Endothelial cell of umbilical vein (primary cell): ENCODE measurements at regions of chr15 and their contacts with region 1.

Region 1: GRCh38 chr15:68304589-68305337 is 27.2 kb downstream of the FEM1B start:
- DNase-seq: no peak
- H3K4me3 ChIP-seq: no peak overlapping the region
- H3K27ac ChIP-seq: no peak overlapping the region
- H3K4me1 ChIP-seq: peaks cover 3% of the 10 kb centered on the region
- H3K27me3 ChIP-seq: no peaks in the 10 kb centered on the region
- CTCF ChIP-seq: no peak
- POLR2A ChIP-seq: no peak

Region 2: DNA sequence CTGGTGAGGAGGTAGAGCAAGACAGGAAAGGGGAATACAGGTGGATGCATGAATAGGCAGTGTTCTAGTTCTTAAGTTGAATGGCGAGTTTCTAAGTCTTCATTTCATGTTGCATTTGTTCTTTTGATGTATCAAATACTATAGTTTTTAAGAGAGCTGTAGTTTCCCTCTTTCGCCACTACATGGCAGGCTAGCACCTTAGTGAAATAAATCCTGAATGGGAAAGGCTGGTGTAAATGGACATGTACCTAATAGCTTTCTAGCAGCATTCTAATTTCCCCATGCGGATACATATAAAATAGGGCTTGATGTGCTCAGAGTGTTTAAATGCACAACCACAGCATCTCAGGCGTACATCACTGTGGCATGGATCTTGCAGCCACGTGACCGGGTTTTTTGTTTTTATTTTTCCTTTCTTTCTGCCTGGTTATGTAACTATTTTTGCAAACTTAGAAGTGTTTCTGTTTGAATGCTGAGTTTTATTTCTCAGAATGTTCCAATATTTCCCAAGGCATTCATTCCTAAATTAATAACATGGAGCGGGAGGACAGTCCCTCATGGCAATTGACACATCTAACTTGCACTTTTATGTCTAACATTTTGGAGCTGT is 51.7 kb before region 1 on chr15:
- CTCF ChIA-PET with region 1: interaction called, 233 read pairs
- POLR2A ChIA-PET with region 1: interaction called, 4 read pairs
- dilution Hi-C with region 1: no loop called
- intact Hi-C with region 1: loop called (anchors 1 kb)
- DNase-seq: peak; percentile 80
- H3K4me3 ChIP-seq: no peak overlapping the region
- H3K27ac ChIP-seq: no peak overlapping the region
- H3K4me1 ChIP-seq: peaks cover 5% of the 10 kb centered on the region
- H3K27me3 ChIP-seq: peaks cover 7 to 10% of the 10 kb centered on the region in 2 experiments
- CTCF ChIP-seq: peak; percentile 64 to 66
- POLR2A ChIP-seq: no peak

Region 3: DNA sequence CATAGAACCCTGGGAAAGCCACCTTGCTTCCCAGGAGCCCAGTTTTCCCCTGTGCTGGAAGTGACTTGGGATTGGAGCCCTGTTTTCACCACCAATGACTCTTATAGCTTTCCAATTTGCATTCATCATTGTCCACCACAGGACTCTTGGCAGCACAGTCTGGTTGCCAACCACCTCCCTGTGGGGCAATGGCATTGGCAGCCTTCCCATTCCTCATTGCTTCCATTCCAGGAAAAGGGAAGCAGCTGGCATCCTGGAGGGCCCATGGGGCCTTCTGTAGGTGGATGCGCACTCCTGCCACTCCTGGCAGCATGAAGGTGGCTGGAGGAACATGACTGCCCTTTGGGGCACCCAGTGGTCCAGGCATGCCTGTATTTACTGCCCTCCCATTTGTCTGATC is 30.5 kb after region 1 on chr15:
- CTCF ChIA-PET with region 1: interaction called, 15 read pairs
- POLR2A ChIA-PET with region 1: interaction called, 3 read pairs
- dilution Hi-C with region 1: no loop called
- intact Hi-C with region 1: no loop called
- DNase-seq: peak; percentile 59
- H3K4me3 ChIP-seq: no peak overlapping the region
- H3K27ac ChIP-seq: no peak overlapping the region
- H3K4me1 ChIP-seq: peaks cover 9% of the 10 kb centered on the region
- H3K27me3 ChIP-seq: peaks cover 0 to 1% of the 10 kb centered on the region in 2 experiments
- CTCF ChIP-seq: no peak
- POLR2A ChIP-seq: no peak

Region 4: GRCh38 chr15:68372291-68372811 is 67.6 kb after region 1 on chr15:
- CTCF ChIA-PET with region 1: interaction called, 53 read pairs
- POLR2A ChIA-PET with region 1: no interaction called
- dilution Hi-C with region 1: no loop called
- intact Hi-C with region 1: loop called (anchors 1 kb)
- DNase-seq: peak; percentile 53
- H3K4me3 ChIP-seq: no peak overlapping the region
- H3K27ac ChIP-seq: no peak overlapping the region
- H3K4me1 ChIP-seq: peaks cover 15% of the 10 kb centered on the region
- H3K27me3 ChIP-seq: no peaks in the 10 kb centered on the region
- CTCF ChIP-seq: peak; percentile 41 to 78
- POLR2A ChIP-seq: no peak

Region 5: DNA sequence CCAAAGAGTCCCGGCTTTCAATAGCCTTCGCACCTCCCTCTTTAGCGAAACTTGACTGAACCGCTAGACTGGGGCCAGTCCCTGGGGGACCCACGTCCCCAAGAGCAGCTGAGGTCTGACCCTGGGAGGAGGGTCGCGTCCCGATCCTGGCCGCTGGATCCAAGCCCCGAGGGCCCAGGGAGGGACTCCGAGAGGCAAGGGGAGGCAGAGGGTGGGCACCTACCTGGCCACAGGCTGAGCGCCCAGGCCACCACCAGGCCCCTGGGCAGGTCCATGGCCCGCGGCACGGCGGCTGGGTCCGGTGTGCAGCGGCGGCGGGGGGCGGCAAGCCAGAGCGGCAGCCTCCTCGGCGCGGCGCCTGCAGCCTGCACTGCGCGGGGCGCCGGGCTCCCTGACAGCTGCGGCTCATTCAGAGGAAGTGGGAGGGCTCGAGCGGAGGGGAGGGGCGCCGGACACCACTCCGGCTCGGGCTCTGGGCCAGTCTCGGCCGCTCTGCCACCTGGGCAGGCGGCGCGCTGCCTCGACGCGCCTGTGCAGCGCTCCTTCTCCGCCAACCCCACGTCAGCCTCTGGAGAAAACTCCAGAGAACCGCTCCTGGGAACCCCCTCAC is 127.1 kb after region 1 on chr15 and contains the start of gene ITGA11:
- CTCF ChIA-PET with region 1: interaction called, 6 read pairs
- POLR2A ChIA-PET with region 1: no interaction called
- dilution Hi-C with region 1: no loop called
- intact Hi-C with region 1: loop called (anchors 1 kb)
- DNase-seq: peak; percentile 60
- H3K4me3 ChIP-seq: peak within 1 kb of the TSS; percentile 19 to 37 (median 23)
- H3K27ac ChIP-seq: no peak within 1 kb of the TSS
- H3K4me1 ChIP-seq: peaks cover 13% of the 10 kb centered on the region
- H3K27me3 ChIP-seq: peaks cover 69 to 76% of the 10 kb centered on the region in 2 experiments
- CTCF ChIP-seq: no peak
- POLR2A ChIP-seq: no peak
- total RNA-seq, gene ITGA11: 0.18 and 0.58 TPM in 2 replicates

Region 6: DNA sequence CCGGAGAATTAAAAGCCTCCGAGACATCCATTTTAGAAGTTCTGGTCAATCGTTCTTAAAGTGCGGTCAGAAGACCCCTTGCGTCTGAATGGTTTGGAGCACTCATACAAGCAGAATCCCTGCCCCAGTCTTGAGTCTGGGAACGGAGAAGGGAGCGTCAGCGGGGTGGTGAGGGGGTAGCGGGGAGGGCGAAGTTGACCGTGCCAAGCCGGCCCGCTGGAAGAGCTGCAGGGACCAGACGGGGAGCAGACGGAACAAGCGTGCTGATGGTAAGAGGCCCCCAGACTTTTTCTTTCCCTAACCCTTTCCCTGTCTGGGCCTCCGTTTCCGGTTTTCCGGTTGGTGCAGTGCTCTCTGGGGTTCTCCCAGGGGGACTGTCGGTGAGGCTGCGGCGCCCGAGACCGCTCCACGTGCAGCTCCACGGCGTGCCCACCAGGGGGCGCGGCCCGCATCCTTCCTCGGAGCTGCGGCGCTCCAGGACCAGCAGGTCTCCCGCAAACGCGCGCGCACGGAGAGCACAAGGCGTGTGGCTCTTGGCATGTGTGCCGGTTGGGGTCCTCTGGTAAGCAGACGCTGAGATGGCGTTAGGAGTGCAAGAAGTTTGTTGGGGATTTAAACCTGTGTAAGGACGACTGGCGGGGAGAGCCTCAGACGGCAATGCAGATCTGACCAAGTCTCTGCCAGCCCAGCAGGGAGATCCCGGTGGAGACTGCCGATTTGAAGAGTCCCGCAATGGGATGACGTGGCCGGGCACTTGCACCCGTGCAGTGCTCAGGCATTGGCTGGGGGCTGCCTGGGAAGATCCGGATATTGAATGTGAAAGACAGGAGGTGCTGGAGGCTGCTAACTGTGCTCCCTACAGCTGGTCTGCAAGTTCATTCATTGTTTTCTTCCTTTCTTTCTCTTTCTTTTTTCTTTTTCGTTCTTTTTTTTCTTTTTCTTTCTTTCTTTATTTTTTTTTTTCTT is 254.9 kb after region 1 on chr15:
- CTCF ChIA-PET with region 1: interaction called, 27 read pairs
- POLR2A ChIA-PET with region 1: no interaction called
- dilution Hi-C with region 1: no loop called
- intact Hi-C with region 1: loop called (anchors 1 kb)
- DNase-seq: peak; percentile 78
- H3K4me3 ChIP-seq: peak overlapping the region in 2 of 3 experiments; percentile 19 to 46
- H3K27ac ChIP-seq: no peak overlapping the region
- H3K4me1 ChIP-seq: peaks cover 4% of the 10 kb centered on the region
- H3K27me3 ChIP-seq: peaks cover 4 to 7% of the 10 kb centered on the region in 2 experiments
- CTCF ChIP-seq: peak; percentile 98 to 99
- POLR2A ChIP-seq: no peak

Region 7: DNA sequence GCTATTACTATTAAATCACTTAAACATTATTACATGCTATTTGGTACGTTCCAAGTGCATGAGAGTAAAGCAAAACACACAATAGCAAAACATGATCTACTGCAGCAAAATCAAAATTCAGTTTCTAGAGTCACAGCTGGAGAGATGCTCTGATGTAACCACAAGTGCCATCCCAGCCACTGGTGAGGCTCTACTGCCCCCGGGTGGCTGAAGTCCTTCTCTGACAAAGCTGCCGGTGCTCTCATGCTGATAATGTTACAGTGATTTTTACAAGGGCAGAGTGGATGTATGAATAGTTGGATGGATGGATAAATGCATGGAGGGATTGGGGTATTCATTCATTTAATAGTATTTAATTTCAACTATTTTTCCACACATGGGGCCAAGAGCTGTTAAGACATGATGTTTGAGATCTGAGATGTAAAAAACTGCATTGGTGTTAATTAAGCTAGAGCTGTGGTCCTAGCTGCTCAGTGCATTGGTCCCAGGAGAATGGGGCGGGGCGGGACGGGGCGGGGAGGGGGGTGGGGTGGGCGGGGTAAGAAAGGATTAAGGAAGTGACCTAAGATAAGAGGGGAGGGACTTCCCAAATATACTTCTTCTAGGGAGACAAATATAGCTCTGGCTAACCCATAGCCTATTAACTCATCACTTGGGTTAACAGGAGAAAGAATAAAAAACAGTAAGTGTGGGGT is 620.2 kb after region 1 on chr15:
- CTCF ChIA-PET with region 1: interaction called, 37 read pairs
- POLR2A ChIA-PET with region 1: no interaction called
- dilution Hi-C with region 1: no loop called
- intact Hi-C with region 1: loop called (anchors 5 kb)
- DNase-seq: peak; percentile 75
- H3K4me3 ChIP-seq: no peak overlapping the region
- H3K27ac ChIP-seq: no peak overlapping the region
- H3K4me1 ChIP-seq: no peaks in the 10 kb centered on the region
- H3K27me3 ChIP-seq: peaks cover 5 to 37% of the 10 kb centered on the region in 2 experiments
- CTCF ChIP-seq: peak; percentile 72 to 78
- POLR2A ChIP-seq: no peak